HepG2 (cell line): ENCODE measurements at regions of chr9 and their contacts with region 1.

Region 1: DNA sequence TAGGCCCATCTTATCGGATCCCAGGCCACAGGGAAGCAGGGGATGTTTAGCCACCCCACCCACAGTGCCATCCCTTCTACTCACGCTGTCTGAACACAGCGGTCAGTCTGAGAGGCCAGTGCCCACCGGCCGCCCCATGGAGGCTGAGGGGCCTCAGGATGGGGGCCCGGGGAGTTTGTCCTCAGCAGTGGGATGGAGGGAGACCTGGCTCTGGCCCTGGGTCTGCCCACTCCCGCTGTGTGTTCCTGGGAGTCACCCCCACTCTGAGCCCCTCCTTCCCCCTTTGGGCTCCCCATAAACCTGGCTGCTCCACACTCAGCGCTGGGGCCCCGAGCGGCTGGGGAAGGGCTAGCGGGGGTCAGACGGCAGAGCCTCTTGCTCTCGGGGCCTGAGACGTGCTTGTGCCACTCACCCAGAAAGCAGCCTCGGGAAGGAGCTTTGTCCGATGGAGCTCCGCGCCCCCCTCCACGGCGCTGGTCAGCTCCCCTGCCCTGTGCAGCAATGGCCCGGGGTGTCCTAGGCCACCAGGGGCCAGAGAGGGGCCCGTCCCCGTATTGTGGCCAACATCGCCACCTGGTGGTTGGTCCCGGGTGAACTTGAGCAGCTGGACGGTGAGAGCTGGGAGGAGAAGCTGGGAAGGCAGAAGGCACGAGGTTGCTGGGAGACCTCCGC is 10.9 kb upstream of the LAMC3 start:
- DNase-seq: peak; percentile 56
- ATAC-seq: peak; percentile 94
- H3K4me3 ChIP-seq: no peak overlapping the region; a peak in 1 of 6 replicates
- H3K27ac ChIP-seq: no peak overlapping the region
- H3K4me1 ChIP-seq: no peaks in the 10 kb centered on the region
- H3K27me3 ChIP-seq: peaks cover 15 to 85% of the 10 kb centered on the region in 2 experiments
- CTCF ChIP-seq: peak; percentile 94
- EP300 ChIP-seq: no peak
- POLR2A ChIP-seq: no peak
- RAD21 ChIP-seq: peak; percentile 86

Region 2: DNA sequence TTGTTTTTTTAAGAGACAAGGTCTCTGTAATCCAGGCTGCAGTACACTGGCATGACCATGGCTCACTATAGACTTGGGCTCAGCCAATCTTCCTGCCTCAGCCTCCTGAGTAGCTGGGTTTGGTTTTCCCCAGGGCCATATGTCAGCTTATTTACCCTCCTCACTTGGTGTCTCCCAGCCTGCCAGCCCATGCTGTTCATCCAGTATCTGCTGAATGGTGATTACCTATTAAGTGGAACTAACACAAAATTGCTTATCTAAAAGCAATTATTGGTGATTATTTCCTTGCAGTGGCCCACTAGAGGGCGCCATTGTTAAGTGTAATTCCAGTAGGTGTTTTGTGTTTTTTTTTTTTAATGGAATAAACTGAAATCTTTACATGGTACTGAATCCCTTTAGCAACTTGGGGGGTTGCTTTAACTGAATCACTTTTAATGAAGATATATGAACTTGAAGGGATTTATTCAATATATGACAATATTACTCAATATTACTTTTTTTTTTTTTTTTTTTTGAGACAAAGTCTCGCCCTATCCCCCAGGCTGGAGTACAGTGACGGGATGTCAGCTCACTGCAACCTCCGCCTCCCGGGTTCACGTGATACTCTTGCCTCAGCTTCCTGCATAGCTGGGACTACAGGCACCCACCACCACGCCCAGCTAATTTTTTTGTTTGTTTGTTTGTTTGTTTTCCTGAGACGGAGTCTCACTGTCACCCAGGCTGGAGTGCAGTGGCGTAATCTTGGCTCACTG is 290.7 kb before region 1 on chr9:
- CTCF ChIA-PET with region 1: interaction called, 8 read pairs
- POLR2A ChIA-PET with region 1: no interaction called
- in situ Hi-C with region 1: loop called (anchors 10 kb)
- intact Hi-C with region 1: loop called (anchors 5 kb)
- DNase-seq: peak; percentile 63
- ATAC-seq: peak; percentile 65
- H3K4me3 ChIP-seq: no peak overlapping the region
- H3K27ac ChIP-seq: no peak overlapping the region
- H3K4me1 ChIP-seq: no peaks in the 10 kb centered on the region; the same call in 1 of the 2 replicates
- H3K27me3 ChIP-seq: no peaks in the 10 kb centered on the region
- CTCF ChIP-seq: peak; percentile 67
- EP300 ChIP-seq: no peak
- POLR2A ChIP-seq: no peak
- RAD21 ChIP-seq: 0 out of 2 replicates have a peak, but pooled peaks have one; percentile 31

Region 3: DNA sequence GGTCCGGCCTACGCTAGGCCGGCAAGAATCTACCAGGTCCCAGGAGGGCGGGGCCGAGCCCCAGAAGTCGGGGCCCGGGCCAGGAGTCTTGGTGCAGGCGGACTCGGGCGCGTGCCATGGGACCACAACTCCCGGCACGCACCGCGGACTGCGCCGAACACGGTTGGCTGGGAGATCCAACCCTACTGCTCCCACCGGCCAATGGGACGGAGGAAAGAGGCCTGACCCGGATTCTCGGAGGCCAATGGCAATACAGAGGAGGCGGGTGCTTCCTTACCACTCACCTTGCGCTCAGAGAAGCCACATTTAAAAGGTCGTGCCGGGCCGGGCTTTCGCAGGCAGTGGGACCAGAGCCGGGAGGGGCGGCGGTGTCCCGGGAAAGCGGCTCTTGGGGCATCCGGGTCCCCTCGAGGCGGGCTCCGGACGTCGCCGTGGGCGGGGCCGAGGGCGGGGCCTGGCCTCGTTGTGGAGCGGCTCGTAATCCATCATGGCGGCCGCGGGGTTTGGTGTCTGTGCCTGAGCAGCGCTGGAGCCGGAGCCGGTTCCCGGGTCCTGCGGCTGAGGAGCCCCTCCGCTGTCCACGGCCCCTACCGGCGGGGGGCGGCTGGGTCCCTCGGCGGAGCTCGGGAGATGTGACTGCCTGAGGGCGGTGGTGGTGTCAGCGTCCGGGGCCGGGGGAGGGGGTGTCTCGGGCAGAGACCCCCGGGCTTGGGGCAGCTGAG is 285.3 kb before region 1 on chr9:
- CTCF ChIA-PET with region 1: no interaction called
- POLR2A ChIA-PET with region 1: no interaction called
- in situ Hi-C with region 1: loop called (anchors 10 kb)
- intact Hi-C with region 1: loop called (anchors 5 kb)
- DNase-seq: peak; percentile 95
- ATAC-seq: peak; percentile 98
- H3K4me3 ChIP-seq: peak overlapping the region; percentile 91 to 95 (median 92)
- H3K27ac ChIP-seq: peak overlapping the region; percentile 96
- H3K4me1 ChIP-seq: peaks cover 26% of the 10 kb centered on the region
- H3K27me3 ChIP-seq: no peaks in the 10 kb centered on the region; a peak in 1 of 5 replicates
- CTCF ChIP-seq: no peak
- EP300 ChIP-seq: no peak
- POLR2A ChIP-seq: peak in 1 of 2 experiments; percentile 89
- RAD21 ChIP-seq: 0 out of 2 replicates have a peak, but pooled peaks have one; percentile 7

Region 4: GRCh38 chr9:130893341-130894101 is 104.5 kb before region 1 on chr9:
- CTCF ChIA-PET with region 1: no interaction called
- POLR2A ChIA-PET with region 1: no interaction called
- in situ Hi-C with region 1: loop called (anchors 10 kb)
- intact Hi-C with region 1: no loop called
- DNase-seq: no peak
- ATAC-seq: peak; percentile 10
- H3K4me3 ChIP-seq: no peak overlapping the region
- H3K27ac ChIP-seq: no peak overlapping the region
- H3K4me1 ChIP-seq: no peaks in the 10 kb centered on the region
- H3K27me3 ChIP-seq: peaks cover 6 to 24% of the 10 kb centered on the region in 2 experiments; a peak in 3 of 5 replicates
- CTCF ChIP-seq: peak; percentile 37; the same call in 1 of the 2 replicates
- EP300 ChIP-seq: no peak
- POLR2A ChIP-seq: no peak
- RAD21 ChIP-seq: no peak